Esophagus muscularis mucosa (tissue), 4 donors: ENCODE measurements at regions of chr4 and their contacts with region 1.

Region 1: DNA sequence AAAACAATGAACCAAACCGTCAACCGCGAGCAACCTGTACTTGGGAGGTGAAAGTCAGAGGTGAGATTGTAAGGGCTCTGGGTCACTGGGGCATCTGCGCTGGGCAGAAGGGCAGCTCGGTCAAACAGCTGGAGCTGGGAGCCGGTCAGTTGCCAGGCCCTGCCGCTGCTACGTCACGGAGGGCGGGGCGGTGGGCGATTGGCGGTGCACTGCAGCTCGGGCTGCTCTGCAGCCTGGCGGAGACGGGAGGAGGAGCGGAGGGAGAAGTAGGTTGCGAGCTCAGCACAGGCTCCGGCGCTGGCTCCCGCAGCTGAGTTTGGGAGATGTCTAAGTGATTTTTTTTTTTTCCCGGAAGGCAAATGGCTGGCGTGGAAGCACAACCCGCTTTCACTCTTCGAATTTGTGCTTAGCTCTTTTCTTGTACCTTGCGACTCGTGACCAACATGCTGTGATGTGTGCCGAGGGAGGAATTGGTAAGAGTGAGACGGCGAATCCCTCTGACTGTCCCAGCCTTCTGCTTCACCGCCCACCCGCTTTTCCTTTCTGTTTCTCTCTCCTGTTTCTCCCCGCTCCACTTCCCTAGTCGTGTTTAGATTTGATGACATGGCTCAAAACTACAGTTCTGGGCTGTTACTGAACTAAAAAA is at the start of gene ATP10D:
- DNase-seq: peak; percentile 97
- H3K4me3 ChIP-seq: peak within 1 kb of the TSS; percentile 61 to 79 (median 64)
- H3K27ac ChIP-seq: peak within 1 kb of the TSS; percentile 85 to 94 (median 90)
- H3K4me1 ChIP-seq: peaks cover 0 to 23% (median 19%) of the 10 kb centered on the region in 4 donors
- H3K27me3 ChIP-seq: no peaks in the 10 kb centered on the region
- CTCF ChIP-seq: peak in 1 of 3 experiments; percentile 33
- EP300 ChIP-seq: no peak
- POLR2A ChIP-seq: peak; percentile 48
- total RNA-seq, gene ATP10D: 16.8 to 24.4 (median 19.8) TPM

Region 2: DNA sequence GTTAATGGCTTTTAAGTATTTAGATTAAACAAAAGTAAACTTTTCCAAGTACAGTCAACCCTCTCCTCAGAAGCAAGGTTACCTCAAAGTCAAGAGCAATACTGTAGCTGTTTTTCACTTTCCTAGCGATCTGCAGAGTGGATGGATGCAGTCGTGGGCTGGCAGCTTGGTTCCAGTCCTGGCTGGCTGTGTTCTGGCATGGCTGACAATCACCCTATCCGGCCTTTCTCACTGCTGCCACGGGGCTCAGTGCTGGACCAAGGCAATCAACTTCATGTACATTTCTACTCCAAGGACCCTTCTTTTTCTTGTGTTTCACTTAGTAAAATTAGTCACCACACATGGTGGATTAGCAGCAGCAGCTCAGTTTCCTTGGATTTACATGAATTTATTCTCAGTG is 245.5 kb before region 1 on chr4:
- intact Hi-C with region 1: no loop called
- DNase-seq: no peak
- H3K4me3 ChIP-seq: no peak overlapping the region
- H3K27ac ChIP-seq: no peak overlapping the region
- H3K4me1 ChIP-seq: peaks cover 0 to 7% (median 0%) of the 10 kb centered on the region in 4 donors
- H3K27me3 ChIP-seq: no peaks in the 10 kb centered on the region
- CTCF ChIP-seq: no peak
- EP300 ChIP-seq: no peak
- POLR2A ChIP-seq: no peak

Region 3: GRCh38 chr4:47525154-47525819 is 40.1 kb after region 1 on chr4:
- intact Hi-C with region 1: loop called (anchors 5 kb)
- DNase-seq: no peak
- H3K4me3 ChIP-seq: no peak overlapping the region
- H3K27ac ChIP-seq: peak overlapping the region; percentile 46 to 71 (median 65)
- H3K4me1 ChIP-seq: peaks cover under 1 to 18% (median 11%) of the 10 kb centered on the region in 4 donors
- H3K27me3 ChIP-seq: no peaks in the 10 kb centered on the region
- CTCF ChIP-seq: no peak
- EP300 ChIP-seq: no peak
- POLR2A ChIP-seq: no peak

Region 4: GRCh38 chr4:47551682-47552081 is 66.5 kb after region 1 on chr4:
- intact Hi-C with region 1: no loop called
- DNase-seq: no peak
- H3K4me3 ChIP-seq: no peak overlapping the region
- H3K27ac ChIP-seq: no peak overlapping the region
- H3K4me1 ChIP-seq: no peaks in the 10 kb centered on the region
- H3K27me3 ChIP-seq: no peaks in the 10 kb centered on the region
- CTCF ChIP-seq: no peak
- EP300 ChIP-seq: no peak
- POLR2A ChIP-seq: no peak

Region 5: GRCh38 chr4:47562297-47562696 is 77.1 kb after region 1 on chr4:
- intact Hi-C with region 1: loop called (anchors 5 kb)
- DNase-seq: no peak
- H3K4me3 ChIP-seq: no peak overlapping the region
- H3K27ac ChIP-seq: no peak overlapping the region
- H3K4me1 ChIP-seq: peaks cover 0 to 7% (median 3%) of the 10 kb centered on the region in 4 donors
- H3K27me3 ChIP-seq: no peaks in the 10 kb centered on the region
- CTCF ChIP-seq: no peak
- EP300 ChIP-seq: no peak
- POLR2A ChIP-seq: no peak

Region 6: GRCh38 chr4:47686294-47686872 is 201.2 kb after region 1 on chr4:
- intact Hi-C with region 1: no loop called
- DNase-seq: no peak
- H3K4me3 ChIP-seq: no peak overlapping the region
- H3K27ac ChIP-seq: no peak overlapping the region
- H3K4me1 ChIP-seq: no peaks in the 10 kb centered on the region
- H3K27me3 ChIP-seq: no peaks in the 10 kb centered on the region
- CTCF ChIP-seq: peak; percentile 41 to 56 (median 55)
- EP300 ChIP-seq: no peak
- POLR2A ChIP-seq: no peak

Region 7: DNA sequence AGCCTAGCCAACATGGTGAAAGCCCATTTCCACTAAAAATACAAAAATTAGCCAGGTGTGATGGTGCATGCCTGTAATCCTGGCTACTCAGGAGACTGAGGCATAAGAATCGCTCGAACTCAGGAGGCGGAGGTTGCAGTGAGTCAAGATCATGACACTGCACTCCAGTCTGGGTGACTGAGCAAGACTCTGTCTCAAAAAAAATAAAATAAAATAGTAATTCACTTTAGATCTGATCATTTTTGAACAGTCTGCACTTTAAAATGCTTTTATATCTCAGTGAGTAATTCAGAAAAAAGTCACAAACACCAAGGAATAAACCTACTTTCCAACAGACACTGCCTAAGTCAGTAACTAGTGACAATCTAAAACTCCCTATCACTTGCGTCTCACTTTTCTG is 378.3 kb after region 1 on chr4:
- intact Hi-C with region 1: no loop called
- DNase-seq: no peak
- H3K4me3 ChIP-seq: no peak overlapping the region
- H3K27ac ChIP-seq: no peak overlapping the region
- H3K4me1 ChIP-seq: peaks cover 0 to 16% (median 3%) of the 10 kb centered on the region in 4 donors
- H3K27me3 ChIP-seq: no peaks in the 10 kb centered on the region
- CTCF ChIP-seq: no peak
- EP300 ChIP-seq: no peak
- POLR2A ChIP-seq: no peak